Activated naive CD4-positive, alpha-beta T cell treated with anti-CD3 and anti-CD28 coated beads for 36 hours (primary cell): ENCODE measurements at regions of chr7 and their contacts with region 1.

Region 1: DNA sequence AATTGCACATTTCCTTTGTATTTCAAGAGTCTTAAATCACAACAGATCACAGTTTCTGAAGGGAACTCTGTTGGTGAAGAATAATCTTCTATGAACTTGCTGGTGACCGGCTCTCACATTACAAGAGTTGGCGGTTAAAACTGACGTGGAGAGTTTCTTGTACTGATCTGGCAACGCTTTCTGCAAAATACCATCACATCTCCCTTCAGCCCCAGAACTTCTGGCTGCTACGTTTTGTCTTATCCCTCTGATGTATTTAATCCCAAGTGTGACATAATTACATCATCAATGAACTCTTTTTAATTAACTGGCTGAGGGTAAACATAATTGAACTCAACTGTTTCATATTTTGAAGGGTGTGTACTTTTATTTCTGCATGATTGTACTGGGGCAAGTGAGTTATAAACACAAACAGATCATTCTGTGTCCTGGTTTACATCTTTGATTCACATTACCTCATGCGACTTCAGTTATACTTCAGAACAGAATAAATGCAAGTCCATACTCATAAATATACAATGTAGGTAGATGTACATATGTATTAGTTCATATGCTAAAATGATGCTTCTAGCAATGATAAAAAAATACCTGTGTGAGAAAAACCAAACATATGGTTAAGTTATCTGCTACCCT is 105.1 kb upstream of the NPVF start:
- DNase-seq: no peak
- H3K4me3 Mint-ChIP-seq: no peak overlapping the region
- H3K27ac Mint-ChIP-seq: no peak overlapping the region
- H3K4me1 Mint-ChIP-seq: no peaks in the 10 kb centered on the region
- H3K27me3 Mint-ChIP-seq: peaks cover 2% of the 10 kb centered on the region

Region 2: GRCh38 chr7:25353732-25354131 is 20.3 kb after region 1 on chr7:
- CTCF ChIA-PET with region 1: no interaction called
- intact Hi-C with region 1: loop called (anchors 1 kb)
- DNase-seq: no peak
- H3K4me3 Mint-ChIP-seq: no peak overlapping the region
- H3K27ac Mint-ChIP-seq: no peak overlapping the region
- H3K4me1 Mint-ChIP-seq: peaks cover 11% of the 10 kb centered on the region
- H3K27me3 Mint-ChIP-seq: no peaks in the 10 kb centered on the region